RWPE1 (cell line): ENCODE measurements at regions of chr5 and their contacts with region 1.

Region 1: DNA sequence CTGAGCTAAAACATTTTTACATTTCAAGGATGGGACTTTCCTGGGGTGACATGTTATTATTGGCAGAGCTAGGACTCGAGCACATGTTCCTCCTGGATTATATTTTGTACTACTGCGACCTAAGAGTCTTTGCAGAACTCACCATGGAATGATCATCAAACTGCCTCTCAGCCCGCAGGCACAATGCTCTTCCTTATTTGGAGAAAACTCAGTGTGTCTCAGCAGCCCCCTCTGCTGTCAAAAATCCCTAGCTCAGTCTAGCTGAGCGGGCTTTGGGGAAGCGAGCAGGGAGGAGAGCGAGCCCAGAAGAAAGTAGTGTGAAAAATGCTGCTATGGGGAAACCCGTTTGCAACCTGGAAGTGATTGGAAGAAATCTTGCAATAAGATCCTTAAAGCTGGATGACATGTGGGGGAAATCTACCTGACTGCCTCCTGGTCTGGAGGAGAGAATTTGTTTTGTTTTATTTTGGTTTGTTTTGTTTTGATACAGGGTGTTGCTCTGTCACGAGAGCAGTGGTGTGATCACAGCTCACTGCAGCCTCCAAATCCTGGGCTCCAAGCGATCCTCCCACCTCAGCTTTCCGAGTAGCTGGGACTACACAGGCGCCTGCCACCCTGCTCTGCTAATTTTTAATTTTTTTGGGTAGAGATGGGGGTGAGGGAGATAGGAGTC is 89.9 kb upstream of the CLINT1 start:
- DNase-seq: peak; percentile 89
- H3K27ac ChIP-seq: no peak overlapping the region
- CTCF ChIP-seq: peak; percentile 94

Region 2: DNA sequence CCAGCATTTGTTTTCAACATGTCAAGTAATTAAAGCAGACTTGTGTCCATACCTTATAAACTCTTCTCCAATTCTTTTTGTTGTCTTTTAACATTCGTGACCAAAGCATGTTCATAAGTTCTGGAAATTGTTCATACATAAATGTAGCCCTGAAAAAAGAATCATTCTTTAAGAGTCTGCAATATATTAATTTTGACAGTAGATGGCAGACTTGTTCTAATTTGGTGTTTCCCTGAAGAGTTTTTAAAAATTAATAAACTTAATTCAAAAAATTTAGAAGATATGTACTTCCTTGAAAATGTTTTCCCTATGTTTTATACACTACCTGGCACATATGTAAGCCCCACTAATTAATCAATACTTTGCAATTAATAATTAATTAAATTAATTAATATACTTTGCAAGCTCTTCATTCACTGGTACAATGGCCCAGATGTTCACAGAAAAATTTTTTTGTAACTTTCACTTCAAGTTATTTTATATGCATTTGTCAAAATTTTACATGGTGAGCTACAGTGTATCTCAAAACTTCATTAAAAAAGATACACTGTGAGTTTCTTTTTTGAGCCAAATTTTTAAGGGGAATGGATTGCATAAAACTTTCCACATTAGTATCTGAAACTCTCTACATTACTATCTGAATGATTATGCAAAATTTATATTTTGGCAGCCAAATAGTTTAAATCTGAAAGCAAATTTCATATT is 132.0 kb before region 1 on chr5:
- CTCF ChIA-PET with region 1: interaction called, 23 read pairs
- POLR2A ChIA-PET with region 1: no interaction called
- DNase-seq: peak; percentile 21
- H3K27ac ChIP-seq: no peak overlapping the region
- CTCF ChIP-seq: peak; percentile 81

Region 3: DNA sequence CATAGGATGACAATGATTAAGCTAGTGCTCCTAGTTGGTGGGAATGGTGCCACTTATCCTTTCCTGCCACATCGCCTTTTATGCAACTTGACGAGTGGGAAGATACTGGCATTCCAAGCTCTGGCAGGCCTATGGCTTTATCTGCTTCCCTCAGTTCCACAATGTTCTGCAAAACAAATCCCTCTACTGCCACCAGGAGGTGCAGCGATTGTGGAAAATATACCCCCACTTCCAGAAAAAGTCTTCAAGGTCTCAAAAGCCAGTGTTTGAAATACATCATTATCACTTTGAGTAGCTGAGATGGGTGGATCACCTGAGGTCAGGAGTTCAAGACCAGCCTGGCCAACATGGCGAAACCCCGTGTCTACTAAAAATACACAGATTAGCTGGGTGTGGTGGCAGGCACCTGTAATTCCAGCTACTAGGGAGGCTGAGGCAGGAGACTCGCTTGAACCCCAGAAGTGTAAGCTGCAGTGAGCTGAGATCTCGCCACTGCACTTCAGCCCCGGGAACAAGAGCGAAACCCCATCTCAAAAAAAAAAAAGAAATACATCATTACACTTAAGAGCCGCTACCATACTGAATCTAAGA is 93.4 kb before region 1 on chr5:
- CTCF ChIA-PET with region 1: interaction called, 17 read pairs
- POLR2A ChIA-PET with region 1: no interaction called
- DNase-seq: peak; percentile 62
- H3K27ac ChIP-seq: no peak overlapping the region
- CTCF ChIP-seq: peak; percentile 56